Upper lobe of right lung (tissue), 1 donor: ENCODE measurements at regions of chr17 and their contacts with region 1.

Region 1: DNA sequence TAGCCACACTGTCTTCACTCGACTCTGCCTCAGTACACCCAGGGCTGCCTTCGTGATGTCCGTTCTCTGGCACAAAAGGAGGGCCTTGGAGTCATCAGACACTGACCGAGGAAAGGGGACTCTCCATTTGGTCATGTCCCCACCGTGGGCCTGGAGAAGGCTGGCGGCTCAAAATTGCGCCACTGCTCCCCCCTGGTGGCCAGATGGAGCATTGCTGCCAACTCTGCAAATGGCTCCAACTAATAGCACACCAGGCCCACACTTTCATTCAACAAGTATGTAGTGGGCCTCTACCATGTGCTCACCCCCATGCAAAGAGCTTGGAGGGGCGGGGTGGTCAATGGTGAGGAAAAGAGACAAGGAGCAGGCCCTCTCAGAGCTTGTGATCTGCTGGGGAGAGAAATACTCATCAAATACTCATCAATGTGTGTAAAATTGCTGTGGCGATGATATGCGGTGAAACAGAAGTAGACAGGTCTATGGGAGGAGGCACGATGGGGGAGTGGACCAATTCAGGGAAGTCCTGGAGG is 5.2 kb upstream of the GRIN2C start:
- DNase-seq: peak; percentile 83
- ATAC-seq: peak; percentile 77
- H3K4me3 ChIP-seq: no peak overlapping the region
- H3K27ac ChIP-seq: no peak overlapping the region
- H3K4me1 ChIP-seq: peaks cover 20% of the 10 kb centered on the region
- H3K27me3 ChIP-seq: peaks cover 19% of the 10 kb centered on the region
- CTCF ChIP-seq: peak; percentile 96

Region 2: DNA sequence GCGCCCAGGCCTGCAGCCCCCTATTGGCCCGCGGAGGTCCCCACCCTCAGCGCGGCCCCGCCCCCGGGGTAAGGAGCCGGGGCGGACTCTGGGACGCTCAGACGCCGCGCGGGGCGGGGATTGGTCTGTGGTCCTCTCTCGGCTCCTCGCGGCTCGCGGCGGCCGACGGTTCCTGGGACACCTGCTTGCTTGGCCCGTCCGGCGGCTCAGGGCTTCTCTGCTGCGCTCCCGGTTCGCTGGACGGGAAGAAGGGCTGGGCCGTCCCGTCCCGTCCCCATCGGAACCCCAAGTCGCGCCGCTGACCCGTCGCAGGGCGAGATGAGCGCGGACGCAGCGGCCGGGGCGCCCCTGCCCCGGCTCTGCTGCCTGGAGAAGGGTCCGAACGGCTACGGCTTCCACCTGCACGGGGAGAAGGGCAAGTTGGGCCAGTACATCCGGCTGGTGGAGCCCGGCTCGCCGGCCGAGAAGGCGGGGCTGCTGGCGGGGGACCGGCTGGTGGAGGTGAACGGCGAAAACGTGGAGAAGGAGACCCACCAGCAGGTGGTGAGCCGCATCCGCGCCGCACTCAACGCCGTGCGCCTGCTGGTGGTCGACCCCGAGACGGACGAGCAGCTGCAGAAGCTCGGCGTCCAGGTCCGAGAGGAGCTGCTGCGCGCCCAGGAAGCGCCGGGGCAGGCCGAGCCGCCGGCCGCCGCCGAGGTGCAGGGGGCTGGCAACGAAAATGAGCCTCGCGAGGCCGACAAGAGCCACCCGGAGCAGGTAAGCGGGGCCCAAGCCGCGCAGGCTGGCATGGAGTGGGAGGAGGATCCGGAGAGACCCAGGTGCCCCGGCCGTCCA is 116.2 kb before region 1 on chr17 and contains the start of gene NHERF1:
- intact Hi-C with region 1: loop called (anchors 10 kb)
- DNase-seq: peak; percentile 98
- ATAC-seq: peak; percentile 95
- H3K4me3 ChIP-seq: peak within 1 kb of the TSS; percentile 95
- H3K27ac ChIP-seq: peak within 1 kb of the TSS; percentile 81
- H3K4me1 ChIP-seq: peaks cover 53% of the 10 kb centered on the region
- H3K27me3 ChIP-seq: no peaks in the 10 kb centered on the region
- CTCF ChIP-seq: peak; percentile 22
- total RNA-seq, gene NHERF1: 28.4 TPM

Region 3: DNA sequence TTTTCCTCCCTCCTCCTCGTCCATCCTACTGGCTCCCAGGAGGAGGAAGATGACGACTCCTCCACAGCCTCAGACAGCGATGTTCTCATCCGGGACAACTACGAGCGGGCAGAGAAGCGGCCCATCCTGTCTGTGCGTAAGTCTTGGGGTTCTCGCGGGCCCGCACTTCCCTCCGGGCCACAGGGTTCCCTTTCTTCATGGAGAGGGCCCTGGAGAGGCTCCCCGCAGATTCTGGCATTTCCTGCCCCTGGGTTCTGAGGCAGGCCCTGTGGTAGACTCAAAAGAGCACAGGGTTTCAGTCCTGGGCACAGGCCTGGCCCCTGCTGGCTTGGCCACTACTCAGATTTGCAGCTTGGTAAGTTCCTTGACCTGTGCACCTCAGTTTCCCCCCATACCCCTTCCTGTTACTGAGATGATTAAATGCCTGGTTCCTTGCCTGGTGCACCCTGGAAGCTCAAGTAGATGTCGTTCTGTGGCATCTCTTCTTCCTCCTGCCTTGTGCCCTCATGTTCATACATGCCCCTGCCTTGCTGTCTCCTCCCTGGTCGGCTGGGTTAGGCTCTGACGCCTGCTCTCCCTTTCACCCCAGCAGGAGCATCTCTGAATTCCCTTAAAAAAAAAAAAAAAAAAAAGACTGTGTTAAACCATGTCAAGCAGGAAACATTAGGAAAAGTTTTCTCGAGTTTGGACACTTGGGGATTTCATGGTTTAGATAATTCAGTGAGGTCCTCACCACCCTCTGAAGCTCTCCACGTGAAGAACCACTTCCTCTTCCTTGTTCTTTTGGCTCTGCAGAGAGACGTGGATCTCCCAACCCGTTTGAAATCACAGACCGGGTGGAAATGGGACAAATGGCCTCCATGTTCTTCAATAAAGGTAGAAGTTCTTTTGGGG is 74.5 kb before region 1 on chr17:
- intact Hi-C with region 1: loop called (anchors 2 kb)
- DNase-seq: no peak
- ATAC-seq: peak; percentile 54
- H3K4me3 ChIP-seq: no peak overlapping the region
- H3K27ac ChIP-seq: no peak overlapping the region
- H3K4me1 ChIP-seq: peaks cover 4% of the 10 kb centered on the region
- H3K27me3 ChIP-seq: no peaks in the 10 kb centered on the region
- CTCF ChIP-seq: no peak

Region 4: DNA sequence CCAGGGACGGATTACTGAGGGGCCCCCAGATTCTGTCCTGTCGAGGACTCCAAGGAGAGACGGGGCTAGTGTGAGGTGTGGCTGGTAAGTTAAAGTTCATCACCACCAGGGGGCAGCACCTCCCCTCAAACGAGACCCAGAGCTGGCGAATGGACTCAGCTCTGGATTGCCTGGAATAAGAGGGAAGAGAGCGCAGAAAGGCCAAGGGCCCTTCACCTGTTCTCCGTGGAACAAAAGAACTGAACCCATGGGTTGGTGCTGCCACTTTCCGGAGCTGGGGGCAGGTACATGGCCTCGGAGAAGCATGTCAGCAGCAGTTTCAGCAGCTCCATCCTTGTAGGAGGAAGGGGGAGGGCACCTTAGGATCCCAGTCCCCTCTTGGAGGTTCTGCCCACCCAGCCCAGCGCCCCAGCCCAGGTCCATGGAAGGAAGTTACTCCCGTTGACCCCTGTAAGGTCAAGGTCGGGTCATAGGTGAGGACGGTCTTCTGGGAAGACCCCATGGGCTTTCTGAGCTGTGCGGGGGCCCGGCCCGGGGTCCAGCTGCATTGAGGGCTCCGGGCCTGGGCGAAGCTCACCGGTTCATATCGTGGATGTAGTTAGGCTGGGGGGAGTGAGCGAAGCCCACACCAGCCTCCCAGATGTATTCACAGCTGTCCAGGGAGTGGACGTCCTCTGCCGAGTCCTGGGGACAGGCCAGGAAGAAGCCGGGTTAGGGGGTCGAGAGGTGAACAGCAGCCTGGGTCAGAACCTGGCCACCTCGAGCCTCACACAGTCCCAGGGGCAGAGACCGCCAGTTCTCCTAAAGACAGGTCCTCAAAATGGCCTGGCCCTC is 96.9 kb after region 1 on chr17:
- intact Hi-C with region 1: no loop called
- DNase-seq: peak; percentile 89
- ATAC-seq: peak; percentile 85
- H3K4me3 ChIP-seq: no peak overlapping the region
- H3K27ac ChIP-seq: no peak overlapping the region
- H3K4me1 ChIP-seq: peaks cover 4% of the 10 kb centered on the region
- H3K27me3 ChIP-seq: no peaks in the 10 kb centered on the region
- CTCF ChIP-seq: peak; percentile 85